ENCODE measurements at regions of chr1 and their contacts with region 1.

Region 1: DNA sequence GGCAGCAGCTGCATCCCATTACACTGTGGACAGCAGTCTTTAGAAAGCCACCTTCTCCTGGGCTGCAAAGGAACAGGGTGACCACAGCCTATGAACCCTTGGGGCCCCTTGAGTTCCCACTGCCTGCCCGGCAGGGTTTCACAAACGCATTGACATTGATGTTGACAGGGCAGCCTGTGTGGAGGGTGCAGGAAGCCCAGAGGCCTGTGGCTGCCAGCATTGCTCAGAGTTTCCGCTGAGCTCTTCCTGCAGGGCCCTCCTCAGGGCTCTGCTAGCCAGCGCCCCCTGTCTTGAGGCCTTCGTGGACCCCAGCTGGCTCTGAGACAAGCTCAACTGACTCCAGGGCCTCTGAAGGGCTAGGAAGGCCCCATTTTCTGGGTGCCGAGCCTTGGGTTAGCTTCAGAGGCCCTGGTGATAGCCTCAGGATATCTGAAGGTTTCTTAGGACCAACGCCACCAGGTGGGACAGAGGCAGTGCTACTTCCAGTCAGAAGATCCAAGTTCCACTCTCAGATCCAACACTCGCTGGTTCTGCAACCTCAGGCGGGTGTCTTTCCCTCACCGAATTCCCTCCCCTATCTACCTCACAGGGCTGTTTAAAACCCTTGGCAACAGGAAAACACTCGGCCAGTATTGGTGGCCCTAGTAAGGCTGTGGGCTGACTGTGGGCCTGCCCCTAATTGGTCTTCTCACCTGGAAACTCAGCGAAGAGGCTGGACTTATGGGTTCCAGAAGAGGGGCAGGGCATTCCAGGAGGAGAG is 27.2 kb upstream of the EPS8L3 start:
- DNase-seq: peak; percentile 91

Region 2: GRCh38 chr1:109239580-109240095 is 551.3 kb before region 1 on chr1:
- intact Hi-C with region 1: loop called in 1 of 2 experiments (anchors 5 kb)
- DNase-seq: no peak

Region 3: DNA sequence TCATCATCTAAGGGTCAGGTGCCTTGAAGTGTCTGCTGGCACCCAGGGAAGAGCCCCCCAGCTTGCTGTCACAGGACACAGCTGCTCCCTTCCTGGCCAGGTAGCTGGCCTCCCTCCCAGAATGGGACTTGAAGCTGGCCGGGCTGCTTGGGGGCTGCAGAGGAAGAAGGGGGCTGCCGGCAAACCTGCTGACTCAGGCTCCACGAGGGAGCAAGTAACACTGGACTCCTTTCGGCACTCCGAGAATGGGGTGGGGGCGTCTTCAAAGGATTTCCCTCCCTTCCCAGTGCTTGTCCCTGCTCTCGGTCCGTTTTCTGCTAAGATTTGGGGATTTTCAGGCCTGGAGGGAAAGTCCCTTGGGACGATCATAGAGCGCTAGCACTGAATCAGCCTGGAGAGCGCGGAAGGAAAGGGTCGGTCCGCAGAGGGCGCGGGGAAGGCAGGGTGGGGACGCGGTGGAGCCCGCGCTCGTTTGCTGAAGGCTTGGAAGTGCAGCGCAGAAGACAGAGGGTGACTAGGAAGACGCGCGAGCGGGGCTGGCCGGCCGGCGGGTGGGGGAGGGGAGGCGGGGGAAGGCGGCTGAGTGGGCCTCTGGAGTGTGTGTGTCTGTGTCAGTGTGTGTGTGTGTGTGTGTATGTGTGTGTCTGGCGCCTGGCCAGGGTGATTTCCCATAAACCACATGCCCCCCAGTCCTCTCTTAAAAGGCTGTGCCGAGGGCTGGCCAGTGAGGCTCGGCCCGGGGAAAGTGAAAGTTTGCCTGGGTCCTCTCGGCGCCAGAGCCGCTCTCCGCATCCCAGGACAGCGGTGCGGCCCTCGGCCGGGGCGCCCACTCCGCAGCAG is 119.4 kb after region 1 on chr1 and contains the start of gene CSF1:
- intact Hi-C with region 1: loop called in 1 of 2 experiments (anchors 10 kb)
- DNase-seq: peak; percentile 93
- total RNA-seq, gene CSF1: 64.1 to 68.7 TPM

Measured in posterior vena cava (tissue), 2 donors.